ENCODE measurements at regions of chr6 and their contacts with region 1.

Region 1: DNA sequence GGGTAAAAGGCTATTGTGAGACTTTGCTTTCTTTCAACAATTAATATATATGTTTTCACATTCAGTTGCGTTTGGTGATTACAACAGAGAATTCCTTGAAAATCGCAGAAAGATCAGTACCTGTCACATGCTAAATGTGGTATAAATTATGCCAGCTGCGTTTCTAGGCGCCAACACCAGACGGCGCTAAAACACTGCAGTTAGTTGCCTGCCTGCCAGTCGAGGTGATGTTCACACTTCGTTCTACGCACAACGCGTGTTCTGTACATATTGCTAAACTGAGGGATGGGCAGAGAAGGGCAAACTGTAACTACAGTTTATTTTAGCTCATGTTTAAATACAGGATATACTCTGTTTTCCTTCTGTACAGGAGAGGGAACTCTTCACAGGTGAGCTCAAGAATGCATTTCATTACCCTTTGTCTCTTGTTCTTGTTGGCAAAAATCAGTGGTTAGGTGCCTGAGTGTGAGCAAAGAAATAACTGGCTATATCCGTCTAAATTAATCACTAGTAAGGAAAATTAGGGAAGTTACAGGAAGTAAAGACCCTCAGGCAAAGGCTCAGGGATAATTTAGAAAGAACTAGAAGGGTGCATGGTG is 100.1 kb upstream of the RGS17 start:
- DNase-seq: peak; percentile 87
- ATAC-seq: peak; percentile 82
- H3K4me3 Mint-ChIP-seq: no peak overlapping the region
- H3K27ac Mint-ChIP-seq: no peak overlapping the region
- H3K4me1 Mint-ChIP-seq: peaks cover 4% of the 10 kb centered on the region; the same call in 1 of the 2 replicates
- H3K27me3 Mint-ChIP-seq: peaks cover 4% of the 10 kb centered on the region
- CTCF ChIP-seq: peak; percentile 91

Region 2: DNA sequence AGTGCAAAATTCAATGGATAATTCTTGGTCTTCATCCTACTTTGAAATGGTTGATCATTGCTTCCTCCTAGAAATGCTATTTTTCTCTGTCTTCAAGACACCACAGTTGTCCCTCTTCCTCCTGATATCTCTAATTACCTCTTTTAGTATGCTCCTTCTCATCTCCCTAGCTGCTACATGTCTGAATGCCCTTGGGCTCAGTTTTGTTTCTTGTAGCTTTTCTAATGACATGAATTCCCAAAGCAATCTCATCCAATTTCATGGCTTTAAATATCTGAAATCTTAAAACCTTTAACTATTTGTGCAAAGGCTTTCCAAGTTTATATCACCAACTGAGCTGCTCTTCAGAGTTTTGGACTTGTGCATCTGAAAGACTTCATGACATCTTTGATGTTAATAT is 20.2 kb after region 1 on chr6:
- CTCF ChIA-PET with region 1: no interaction called
- POLR2A ChIA-PET with region 1: no interaction called
- DNase-seq: no peak
- ATAC-seq: no peak
- H3K4me3 Mint-ChIP-seq: no peak overlapping the region
- H3K27ac Mint-ChIP-seq: no peak overlapping the region
- H3K4me1 Mint-ChIP-seq: no peaks in the 10 kb centered on the region
- H3K27me3 Mint-ChIP-seq: no peaks in the 10 kb centered on the region
- CTCF ChIP-seq: no peak

Region 3: GRCh38 chr6:153553627-153554026 is 322.5 kb after region 1 on chr6:
- CTCF ChIA-PET with region 1: interaction called, 18 read pairs
- POLR2A ChIA-PET with region 1: no interaction called
- DNase-seq: peak; percentile 47
- ATAC-seq: peak; percentile 100
- H3K4me3 Mint-ChIP-seq: no peak overlapping the region
- H3K27ac Mint-ChIP-seq: no peak overlapping the region
- H3K4me1 Mint-ChIP-seq: peaks cover 3% of the 10 kb centered on the region; the same call in 1 of the 2 replicates
- H3K27me3 Mint-ChIP-seq: no peaks in the 10 kb centered on the region
- CTCF ChIP-seq: peak; percentile 34; the same call in 1 of the 2 replicates

Measured in WTC11 (cell line).